Colonic mucosa (tissue), 4 donors: ENCODE measurements at regions of chr9 and their contacts with region 1.

Region 1: DNA sequence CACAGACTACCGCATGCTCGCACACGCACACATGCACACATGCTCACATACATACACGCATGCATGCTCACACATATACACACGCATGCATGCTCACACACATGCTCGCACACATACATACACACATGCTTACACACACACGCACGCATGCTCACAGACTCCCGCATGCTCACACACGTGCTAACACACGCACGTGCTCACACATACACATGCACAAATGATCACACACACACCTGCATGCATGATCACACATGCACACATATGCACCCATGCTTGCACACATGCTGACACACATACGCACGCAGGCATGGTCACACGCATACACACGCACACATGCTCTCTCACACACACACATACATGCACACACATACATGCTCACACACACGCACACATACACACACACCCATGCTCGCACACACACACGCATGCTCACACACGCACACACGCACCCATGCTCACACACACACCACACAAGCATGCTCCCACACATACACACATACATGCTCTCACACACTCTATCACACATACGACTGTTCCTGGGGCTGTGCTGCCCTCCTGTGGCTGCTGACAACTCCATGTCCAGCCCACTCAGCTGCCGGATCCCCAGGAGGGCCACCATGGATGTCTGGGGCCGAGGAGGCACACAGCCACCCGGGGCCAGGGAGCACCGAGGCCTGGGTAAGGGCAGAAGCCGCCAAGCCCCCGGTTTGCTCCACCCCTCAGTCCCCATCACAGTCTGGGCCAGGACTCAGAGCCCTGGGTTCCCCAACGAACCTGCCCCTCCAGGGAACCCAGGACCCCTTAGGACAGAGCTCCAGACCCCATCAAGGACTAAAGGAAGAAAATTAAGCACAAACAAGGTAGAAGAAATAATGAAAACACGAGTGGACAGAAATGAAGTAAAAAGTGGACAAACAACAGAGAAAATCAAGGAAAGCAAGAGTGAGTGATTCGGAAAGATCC is 31.4 kb upstream of the EGFL7 start:
- DNase-seq: peak; percentile 86
- H3K4me3 ChIP-seq: no peak overlapping the region
- H3K27ac ChIP-seq: no peak overlapping the region
- H3K4me1 ChIP-seq: peaks cover 10% of the 10 kb centered on the region
- H3K27me3 ChIP-seq: no peaks in the 10 kb centered on the region
- CTCF ChIP-seq: peak; percentile 78

Region 2: DNA sequence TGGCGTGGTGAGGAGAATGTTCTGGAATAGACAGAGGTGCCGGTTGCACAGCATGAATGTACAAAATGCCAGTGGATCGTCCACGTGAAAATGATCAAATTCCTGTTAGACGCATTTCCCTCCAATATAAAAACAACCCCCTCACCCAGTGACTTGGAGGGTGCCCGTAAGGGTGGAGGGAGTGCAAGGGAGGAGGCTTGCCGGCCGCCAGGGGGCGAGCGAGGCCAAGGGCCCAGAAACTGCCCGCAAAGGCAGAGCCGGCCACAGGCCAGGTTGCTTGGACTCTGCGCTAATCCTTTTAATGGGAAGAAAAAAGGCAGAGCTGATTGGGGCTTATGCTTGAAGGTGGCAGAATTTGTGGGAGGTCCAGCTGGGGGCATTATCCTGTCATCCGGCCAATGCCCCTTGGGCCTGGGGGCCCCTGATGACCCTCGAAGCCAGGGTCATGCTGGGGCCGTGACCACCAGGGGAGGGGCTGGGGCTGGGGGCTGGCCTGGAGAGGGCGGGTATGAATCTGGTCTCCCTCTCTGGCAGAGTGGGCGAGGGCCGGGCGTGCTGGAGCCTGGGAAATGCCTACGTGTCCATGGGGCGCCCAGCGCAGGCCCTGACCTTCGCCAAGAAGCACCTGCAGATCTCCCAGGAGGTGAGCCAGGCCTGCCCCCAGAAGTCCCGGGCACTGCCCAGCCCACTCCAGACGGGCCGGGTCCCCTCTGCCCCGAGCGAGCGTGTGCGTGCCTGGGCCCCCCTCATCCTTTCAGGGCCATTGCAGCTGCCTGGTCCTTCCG is 292.0 kb before region 1 on chr9:
- intact Hi-C with region 1: loop called (anchors 10 kb)
- DNase-seq: peak; percentile 74
- H3K4me3 ChIP-seq: no peak overlapping the region
- H3K27ac ChIP-seq: no peak overlapping the region
- H3K4me1 ChIP-seq: no peaks in the 10 kb centered on the region
- H3K27me3 ChIP-seq: no peaks in the 10 kb centered on the region
- CTCF ChIP-seq: peak; percentile 89

Region 3: DNA sequence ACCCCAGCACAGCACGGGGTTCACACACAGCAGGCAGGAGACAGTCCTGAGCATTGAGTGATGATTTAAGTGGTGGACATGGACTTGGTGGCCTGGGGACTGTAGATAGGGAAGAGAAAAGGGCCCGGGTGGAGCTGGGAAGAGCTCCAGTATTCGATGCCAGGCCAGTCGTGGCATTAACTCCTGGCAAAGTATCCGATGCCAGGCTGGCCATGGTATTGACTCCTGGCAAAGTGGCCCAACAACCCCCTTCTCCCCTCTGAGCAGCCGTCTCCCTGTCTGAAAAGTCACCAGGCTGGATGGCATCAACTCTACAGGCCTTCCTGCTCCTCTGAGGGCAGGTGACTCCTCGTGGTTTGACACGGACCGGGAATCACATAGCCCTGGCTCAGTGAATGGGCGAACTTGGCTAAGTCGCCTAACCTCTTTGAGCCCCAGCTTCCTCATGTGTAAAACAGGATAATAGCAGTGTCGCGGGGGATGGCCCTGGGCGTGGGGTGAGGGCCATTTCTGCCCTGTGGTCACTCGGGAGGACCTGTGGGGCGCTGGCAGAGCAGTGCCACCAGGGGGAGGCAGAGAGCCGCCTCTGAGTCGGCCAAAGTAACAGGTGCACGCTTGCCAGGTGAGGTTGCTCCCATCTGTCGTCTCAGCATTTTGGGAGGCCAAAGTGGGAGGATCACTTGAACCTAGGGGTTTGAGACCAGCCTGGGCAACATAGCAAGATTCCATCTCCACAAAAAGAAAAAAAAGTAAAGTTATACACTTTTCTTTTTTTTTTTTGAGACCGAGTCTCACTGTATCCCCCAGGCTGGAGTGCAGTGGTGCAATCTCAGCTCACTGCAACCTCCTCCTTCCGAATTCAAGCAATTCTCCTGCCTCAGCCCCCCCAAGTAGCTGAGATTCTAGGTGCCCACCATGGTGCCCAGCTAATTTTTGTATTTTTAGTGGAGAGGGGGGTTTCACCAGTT is 142.8 kb before region 1 on chr9:
- intact Hi-C with region 1: loop called (anchors 2 kb)
- DNase-seq: peak; percentile 79
- H3K4me3 ChIP-seq: no peak overlapping the region
- H3K27ac ChIP-seq: no peak overlapping the region
- H3K4me1 ChIP-seq: peaks cover 11% of the 10 kb centered on the region
- H3K27me3 ChIP-seq: no peaks in the 10 kb centered on the region
- CTCF ChIP-seq: peak; percentile 95

Region 4: DNA sequence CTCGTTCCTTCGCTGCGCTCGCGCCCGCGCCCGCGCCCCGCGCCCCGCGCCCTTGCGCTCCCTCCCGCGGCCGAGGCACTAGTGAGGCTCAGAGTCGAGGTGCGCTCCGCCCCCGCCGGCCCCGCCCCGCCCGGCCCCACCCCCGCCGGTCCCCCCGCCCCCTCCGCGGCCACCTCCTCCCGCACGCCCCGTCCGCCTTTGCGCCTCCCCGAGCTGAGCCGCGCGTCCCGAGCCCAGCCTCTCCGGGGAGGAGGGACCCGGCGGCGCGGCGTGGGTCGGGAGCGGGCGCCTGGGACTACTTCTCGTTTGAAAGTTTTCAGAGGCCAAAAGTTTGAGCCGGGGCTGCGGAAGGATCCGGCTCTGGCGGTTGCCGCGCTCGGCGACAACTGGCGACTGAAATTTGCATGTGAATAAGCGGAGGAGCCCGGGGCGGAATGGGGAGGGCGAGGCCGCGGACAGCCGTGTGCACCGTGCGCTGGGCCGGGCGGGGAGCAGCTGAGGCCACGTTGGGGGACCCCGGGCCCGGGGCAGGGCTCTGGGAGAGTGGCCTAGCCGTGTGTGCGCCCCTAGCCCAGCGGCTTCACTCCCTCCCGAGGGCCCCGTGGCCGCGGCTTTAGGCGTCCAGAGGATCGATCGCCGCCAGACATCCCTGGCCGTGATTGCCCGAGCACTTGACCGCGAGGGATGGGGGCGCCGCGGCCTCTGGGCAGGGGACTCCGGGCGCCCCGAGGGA is 85.2 kb before region 1 on chr9 and contains the start of gene NOTCH1:
- intact Hi-C with region 1: loop called (anchors 10 kb)
- DNase-seq: peak; percentile 91
- H3K4me3 ChIP-seq: peak within 1 kb of the TSS; percentile 85
- H3K27ac ChIP-seq: peak within 1 kb of the TSS; percentile 97
- H3K4me1 ChIP-seq: peaks cover 27% of the 10 kb centered on the region
- H3K27me3 ChIP-seq: no peaks in the 10 kb centered on the region
- CTCF ChIP-seq: no peak
- total RNA-seq, gene NOTCH1: 49.3 to 99.4 TPM

Region 5: GRCh38 chr9:137406876-137407589 is 775.7 kb after region 1 on chr9:
- intact Hi-C with region 1: no loop called
- DNase-seq: peak; percentile 76
- H3K4me3 ChIP-seq: peak overlapping the region; percentile 34
- H3K27ac ChIP-seq: peak overlapping the region; percentile 23
- H3K4me1 ChIP-seq: peaks cover 21% of the 10 kb centered on the region
- H3K27me3 ChIP-seq: no peaks in the 10 kb centered on the region
- CTCF ChIP-seq: peak; percentile 81